Right ventricle myocardium superior (tissue), 1 donor: ENCODE measurements at regions of chr5 and their contacts with region 1.

Region 1: GRCh38 chr5:149636851-149637246 is 55.6 kb downstream of the ARHGEF37 start:
- DNase-seq: no peak
- ATAC-seq: peak; percentile 74

Region 2: DNA sequence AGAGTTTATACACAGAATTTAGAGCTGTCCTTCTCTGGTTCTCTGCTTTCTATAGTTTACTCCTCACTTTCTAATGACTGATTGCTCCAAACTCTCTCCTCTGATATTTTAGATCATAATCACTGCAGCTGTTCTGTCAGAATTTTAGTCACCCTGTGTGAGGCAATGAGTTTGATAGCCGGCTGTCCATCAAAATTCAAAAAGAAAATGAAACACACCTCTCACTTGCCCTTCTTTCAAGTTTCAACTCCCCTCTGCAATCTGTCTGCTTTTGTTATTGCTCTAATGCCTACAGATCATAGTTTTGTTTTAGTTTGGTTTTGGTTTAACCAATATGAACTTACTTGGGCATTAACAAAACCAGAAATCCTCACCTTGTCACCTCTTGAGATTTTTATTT is 518.9 kb before region 1 on chr5:
- intact Hi-C with region 1: no loop called
- DNase-seq: no peak
- ATAC-seq: no peak

Region 3: GRCh38 chr5:149990518-149991376 is 353.9 kb after region 1 on chr5:
- intact Hi-C with region 1: loop called (anchors 2 kb)
- DNase-seq: peak; percentile 64
- ATAC-seq: peak; percentile 85